Right ventricle myocardium inferior (tissue), 1 donor: ENCODE measurements at regions of chr1 and their contacts with region 1.

Region 1: DNA sequence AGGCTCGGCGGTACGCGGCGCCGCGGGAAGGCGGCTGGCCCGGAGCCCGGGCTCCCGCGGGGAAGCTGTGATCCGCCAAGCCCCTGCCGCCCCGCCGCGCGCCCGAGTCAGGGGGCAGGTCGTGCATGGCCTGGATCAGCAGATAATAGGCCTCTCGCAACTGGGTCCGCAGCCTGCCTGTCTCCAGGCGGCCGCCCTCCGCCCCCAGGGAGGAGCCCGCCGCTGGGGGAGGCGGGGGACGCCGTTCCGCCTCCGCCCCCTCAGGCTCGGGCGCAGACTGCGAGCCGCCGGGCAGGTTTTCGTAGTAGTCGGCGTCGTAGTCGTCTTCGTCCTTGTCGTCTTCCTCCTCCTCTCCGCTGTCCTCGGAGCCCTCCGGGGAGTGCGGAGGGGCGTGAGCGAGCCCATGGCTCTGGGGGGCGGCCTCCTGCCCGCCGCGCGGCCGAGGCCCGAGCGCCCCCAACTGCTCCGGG is at the start of gene SYDE2:
- DNase-seq: peak; percentile 85
- ATAC-seq: peak; percentile 91
- total RNA-seq, gene SYDE2: 20.7 TPM

Region 2: GRCh38 chr1:85109475-85109874 is 91.4 kb before region 1 on chr1:
- intact Hi-C with region 1: loop called (anchors 5 kb)
- DNase-seq: no peak
- ATAC-seq: peak; percentile 80

Region 3: GRCh38 chr1:85134576-85135395 is 66.1 kb before region 1 on chr1:
- intact Hi-C with region 1: loop called (anchors 5 kb)
- DNase-seq: no peak
- ATAC-seq: no peak

Region 4: DNA sequence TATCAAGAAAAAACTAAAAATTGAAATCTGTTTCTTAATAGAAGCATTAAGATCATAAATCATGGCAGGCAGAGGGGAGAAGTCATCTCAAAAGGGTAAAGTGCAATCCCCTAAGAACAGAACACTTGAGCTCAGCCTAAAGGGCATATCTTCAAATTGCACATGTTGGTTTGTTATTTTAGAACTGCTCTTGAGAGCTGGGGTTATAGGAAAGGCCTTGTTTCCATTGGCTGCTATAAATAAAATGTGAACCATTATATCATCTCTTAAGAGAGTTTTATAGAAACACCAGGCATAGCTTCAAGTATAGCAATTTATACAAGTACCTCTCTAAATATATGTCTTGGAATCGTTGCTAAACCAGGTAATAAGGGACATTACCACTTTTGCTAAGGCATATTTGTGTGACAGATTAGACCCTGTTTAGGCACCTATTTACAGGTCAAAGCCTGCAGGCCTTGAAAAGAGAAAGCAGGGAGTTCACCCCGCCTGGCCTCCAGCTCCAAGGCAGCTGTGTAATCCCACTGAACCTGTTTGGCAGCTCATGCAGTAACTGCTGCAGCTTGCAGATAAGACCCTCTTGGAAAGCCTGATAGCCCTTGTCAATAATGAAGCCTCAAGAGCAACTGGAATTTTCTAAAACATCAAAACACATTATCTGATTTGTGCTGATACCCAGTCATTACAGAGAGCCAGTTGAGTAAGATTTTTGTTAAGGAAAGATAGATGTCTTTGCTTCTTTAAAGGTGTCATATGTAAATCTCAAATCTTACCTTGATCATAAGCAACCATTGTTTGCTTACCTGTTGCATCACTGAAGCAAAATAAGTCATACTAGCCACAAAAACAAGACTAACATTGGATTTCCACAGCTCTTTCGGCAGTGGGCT is 24.1 kb after region 1 on chr1:
- intact Hi-C with region 1: loop called (anchors 2 kb)
- DNase-seq: no peak
- ATAC-seq: peak; percentile 74

Region 5: DNA sequence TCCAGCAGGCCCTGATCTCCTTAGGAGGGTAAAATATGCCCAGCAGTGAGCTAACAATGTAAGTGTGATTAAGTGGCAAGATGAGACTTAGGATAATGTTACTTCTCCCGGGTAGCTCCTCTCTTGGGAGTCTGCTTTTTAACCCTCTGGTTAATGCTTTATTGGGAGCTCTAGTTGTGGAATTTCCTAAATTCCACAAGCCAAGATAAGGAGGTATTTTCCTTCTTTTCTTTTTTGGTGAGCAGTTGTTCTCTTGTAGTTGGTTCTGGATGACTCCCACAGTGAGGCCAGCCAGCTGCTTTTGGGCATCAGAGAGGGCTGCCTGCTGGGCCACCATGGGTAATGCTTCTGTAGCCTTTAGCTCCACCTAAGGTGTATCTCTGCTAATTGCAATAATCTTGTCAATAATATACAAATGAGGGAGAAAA is 39.3 kb after region 1 on chr1:
- intact Hi-C with region 1: loop called (anchors 5 kb)
- DNase-seq: no peak
- ATAC-seq: no peak

Region 6: DNA sequence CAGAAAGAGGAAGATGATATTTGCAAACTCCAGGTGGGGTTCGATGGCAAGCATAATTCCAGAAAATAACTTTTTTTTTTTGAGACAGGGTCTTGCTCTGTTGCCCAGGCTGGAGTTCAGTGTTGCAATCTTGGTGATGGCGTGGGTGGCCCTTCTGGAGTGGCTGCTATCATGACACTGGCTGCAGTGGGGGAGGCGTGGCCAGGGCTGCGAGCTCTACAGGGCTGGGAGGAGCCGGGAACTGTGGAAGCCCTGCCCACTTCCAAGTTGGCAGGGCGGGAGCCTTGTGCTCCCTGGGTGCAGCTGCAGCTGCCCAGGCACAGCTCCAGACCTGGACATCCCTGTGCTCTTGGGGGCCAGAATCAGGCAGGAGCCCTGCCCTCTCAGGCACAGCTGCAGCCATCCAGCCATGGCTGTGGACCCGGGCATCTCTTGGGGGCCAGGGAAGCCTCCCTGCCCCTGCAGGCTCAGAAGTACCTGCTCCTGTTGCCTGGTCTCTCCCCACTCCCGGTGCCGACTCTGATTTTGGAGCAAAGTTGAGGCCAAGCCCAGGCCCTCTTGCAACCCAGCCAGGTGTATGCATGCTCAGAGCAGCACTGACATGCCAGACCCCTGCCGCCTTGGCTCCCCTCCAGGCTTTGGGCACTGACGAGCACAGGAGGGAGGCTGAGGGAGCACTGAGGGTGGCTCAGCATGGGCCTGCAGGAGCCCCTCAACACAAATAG is 82.7 kb after region 1 on chr1:
- intact Hi-C with region 1: no loop called
- DNase-seq: no peak
- ATAC-seq: peak; percentile 62